Caco-2 (cell line): ENCODE measurements at regions of chr10 and their contacts with region 1.

Region 1: GRCh38 chr10:3828404-3829155 is 43.6 kb upstream of the KLF6 start:
- DNase-seq: no peak
- H3K4me3 ChIP-seq: no peak overlapping the region
- H3K4me3 Mint-ChIP-seq: peak overlapping the region; percentile 53
- H3K27ac Mint-ChIP-seq: peak overlapping the region; percentile 94
- H3K4me1 ChIP-seq: peaks cover 84% of the 10 kb centered on the region
- H3K4me1 Mint-ChIP-seq: peaks cover 70% of the 10 kb centered on the region
- H3K27me3 ChIP-seq: no peaks in the 10 kb centered on the region
- H3K27me3 Mint-ChIP-seq: no peaks in the 10 kb centered on the region
- CTCF ChIP-seq: no peak

Region 2: GRCh38 chr10:3749600-3749999 is 79.0 kb before region 1 on chr10:
- CTCF ChIA-PET with region 1: no interaction called
- POLR2A ChIA-PET with region 1: no interaction called
- intact Hi-C with region 1: loop called (anchors 2 kb)
- DNase-seq: peak in 1 of 2 experiments; percentile 49
- H3K4me3 ChIP-seq: no peak overlapping the region
- H3K4me3 Mint-ChIP-seq: no peak overlapping the region
- H3K27ac Mint-ChIP-seq: no peak overlapping the region
- H3K4me1 ChIP-seq: peaks cover 34% of the 10 kb centered on the region
- H3K4me1 Mint-ChIP-seq: peaks cover 44% of the 10 kb centered on the region
- H3K27me3 ChIP-seq: no peaks in the 10 kb centered on the region
- H3K27me3 Mint-ChIP-seq: no peaks in the 10 kb centered on the region
- CTCF ChIP-seq: no peak

Region 3: DNA sequence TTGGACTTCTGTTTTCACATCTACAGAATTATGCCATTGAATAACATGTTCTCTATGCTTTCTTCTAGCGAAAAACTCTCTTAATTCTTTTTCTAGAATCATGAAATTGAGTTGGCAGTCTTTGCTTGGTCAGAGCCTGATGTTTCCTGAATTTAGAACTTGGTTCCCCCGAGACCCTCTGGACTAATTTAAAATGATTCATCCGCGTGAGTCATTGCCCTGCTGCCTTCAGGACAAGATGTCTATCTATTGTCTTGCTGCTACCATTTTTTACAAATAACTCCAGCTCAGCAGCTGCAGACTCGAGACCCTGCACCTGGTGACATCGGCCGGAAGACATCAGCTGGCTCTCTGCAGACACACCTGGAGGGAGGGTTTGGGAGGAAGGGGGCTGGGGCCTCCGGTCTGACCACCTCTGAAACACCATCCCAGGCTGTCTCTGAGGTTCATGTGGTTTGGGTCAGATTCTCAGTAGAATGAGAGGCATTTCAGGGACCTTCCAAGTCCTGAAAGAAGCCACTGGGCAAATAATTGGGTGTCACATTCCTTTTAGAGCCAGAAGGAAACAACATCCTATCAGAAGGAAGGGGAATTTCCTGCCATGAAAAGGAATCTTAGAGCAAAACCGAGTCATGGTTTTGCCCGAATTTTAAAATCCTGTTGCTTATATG is 22.7 kb before region 1 on chr10:
- CTCF ChIA-PET with region 1: interaction called, 3 read pairs
- POLR2A ChIA-PET with region 1: interaction called, 8 read pairs
- intact Hi-C with region 1: loop called (anchors 1 kb)
- DNase-seq: peak; percentile 68 to 80
- H3K4me3 ChIP-seq: no peak overlapping the region
- H3K4me3 Mint-ChIP-seq: peak overlapping the region; percentile 58
- H3K27ac Mint-ChIP-seq: peak overlapping the region; percentile 84
- H3K4me1 ChIP-seq: peaks cover 80% of the 10 kb centered on the region
- H3K4me1 Mint-ChIP-seq: peaks cover 36% of the 10 kb centered on the region
- H3K27me3 ChIP-seq: no peaks in the 10 kb centered on the region
- H3K27me3 Mint-ChIP-seq: no peaks in the 10 kb centered on the region
- CTCF ChIP-seq: no peak

Region 4: GRCh38 chr10:3852147-3852904 is 23.7 kb after region 1 on chr10:
- CTCF ChIA-PET with region 1: no interaction called
- POLR2A ChIA-PET with region 1: interaction called, 13 read pairs
- intact Hi-C with region 1: loop called (anchors 1 kb)
- DNase-seq: peak; percentile 92 to 95
- H3K4me3 ChIP-seq: no peak overlapping the region
- H3K4me3 Mint-ChIP-seq: peak overlapping the region; percentile 67
- H3K27ac Mint-ChIP-seq: peak overlapping the region; percentile 98
- H3K4me1 ChIP-seq: peaks cover 51% of the 10 kb centered on the region
- H3K4me1 Mint-ChIP-seq: peaks cover 54% of the 10 kb centered on the region
- H3K27me3 ChIP-seq: no peaks in the 10 kb centered on the region
- H3K27me3 Mint-ChIP-seq: no peaks in the 10 kb centered on the region
- CTCF ChIP-seq: no peak

Region 5: DNA sequence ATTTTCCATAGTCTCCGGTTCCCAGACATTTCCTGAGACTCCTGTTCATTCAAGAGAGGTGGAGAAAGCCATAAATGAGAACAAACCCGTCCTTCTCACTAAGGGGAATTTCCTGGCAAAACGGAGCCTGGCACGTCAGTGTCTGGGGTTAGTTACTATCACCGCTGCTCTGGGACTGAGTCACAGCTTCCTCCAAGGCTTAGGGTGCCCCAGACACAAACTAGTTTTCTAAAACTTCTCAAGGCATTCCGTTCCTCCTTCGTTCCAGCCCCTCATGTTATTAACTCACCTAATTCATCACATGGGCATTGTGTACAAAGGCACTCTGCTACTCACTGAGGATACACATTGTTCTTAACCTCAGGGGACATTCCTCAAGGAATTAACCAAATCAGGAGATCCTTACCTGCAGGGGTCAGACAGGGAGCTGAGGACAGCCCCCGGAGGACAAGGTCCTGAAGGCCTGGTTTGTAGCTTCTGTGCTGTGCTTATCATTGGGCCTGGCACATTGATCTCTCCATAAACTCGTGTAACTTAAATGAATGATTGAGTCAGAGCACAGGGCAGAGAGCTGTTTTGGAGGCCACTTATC is 59.4 kb after region 1 on chr10:
- CTCF ChIA-PET with region 1: no interaction called
- POLR2A ChIA-PET with region 1: interaction called, 4 read pairs
- intact Hi-C with region 1: loop called (anchors 1 kb)
- DNase-seq: peak; percentile 77 to 89
- H3K4me3 ChIP-seq: no peak overlapping the region
- H3K4me3 Mint-ChIP-seq: peak overlapping the region; percentile 63
- H3K27ac Mint-ChIP-seq: peak overlapping the region; percentile 96
- H3K4me1 ChIP-seq: peaks cover 70% of the 10 kb centered on the region
- H3K4me1 Mint-ChIP-seq: peaks cover 61% of the 10 kb centered on the region
- H3K27me3 ChIP-seq: no peaks in the 10 kb centered on the region
- H3K27me3 Mint-ChIP-seq: no peaks in the 10 kb centered on the region
- CTCF ChIP-seq: no peak

Region 6: GRCh38 chr10:4018054-4018511 is 189.5 kb after region 1 on chr10:
- CTCF ChIA-PET with region 1: no interaction called
- POLR2A ChIA-PET with region 1: no interaction called
- intact Hi-C with region 1: no loop called
- DNase-seq: no peak
- H3K4me3 ChIP-seq: no peak overlapping the region
- H3K4me3 Mint-ChIP-seq: no peak overlapping the region
- H3K27ac Mint-ChIP-seq: no peak overlapping the region
- H3K4me1 ChIP-seq: no peaks in the 10 kb centered on the region
- H3K4me1 Mint-ChIP-seq: no peaks in the 10 kb centered on the region
- H3K27me3 ChIP-seq: no peaks in the 10 kb centered on the region
- H3K27me3 Mint-ChIP-seq: no peaks in the 10 kb centered on the region
- CTCF ChIP-seq: no peak